ENCODE measurements at regions of chr4 and their contacts with region 1.

Region 1: GRCh38 chr4:69881173-69881773 is 21.3 kb upstream of the SULT1E1 start:
- DNase-seq: no peak
- H3K4me3 ChIP-seq: no peak overlapping the region
- H3K27ac ChIP-seq: no peak overlapping the region
- H3K4me1 ChIP-seq: no peaks in the 10 kb centered on the region
- H3K27me3 ChIP-seq: no peaks in the 10 kb centered on the region
- CTCF ChIP-seq: peak in 2 of 3 experiments; percentile 74 to 85; a peak in 3 of 4 replicates
- EP300 ChIP-seq: no peak
- POLR2A ChIP-seq: no peak
- RAD21 ChIP-seq: peak; percentile 97

Region 2: DNA sequence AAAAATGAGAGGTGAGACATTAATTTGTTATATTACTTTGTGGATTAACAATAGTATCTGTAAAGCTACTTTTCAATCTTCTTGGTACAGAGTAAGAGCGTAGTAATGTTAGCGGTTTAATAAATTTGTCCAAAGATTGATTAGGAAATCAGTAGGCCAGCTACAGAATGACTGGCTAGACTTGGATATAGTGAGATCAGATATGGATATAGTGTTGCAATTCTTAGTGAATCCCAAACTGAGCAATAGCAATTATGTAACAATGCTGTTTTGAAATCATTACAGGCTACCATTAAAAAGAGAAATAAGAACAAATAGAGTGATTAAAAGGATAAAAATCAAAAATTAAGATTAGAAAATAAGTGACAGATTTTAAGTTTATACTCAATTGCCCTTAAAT is 241.0 kb before region 1 on chr4:
- CTCF ChIA-PET with region 1: no interaction called
- POLR2A ChIA-PET with region 1: no interaction called
- DNase-seq: no peak
- H3K4me3 ChIP-seq: no peak overlapping the region
- H3K27ac ChIP-seq: no peak overlapping the region
- H3K4me1 ChIP-seq: no peaks in the 10 kb centered on the region
- H3K27me3 ChIP-seq: no peaks in the 10 kb centered on the region
- CTCF ChIP-seq: no peak
- EP300 ChIP-seq: no peak
- POLR2A ChIP-seq: no peak
- RAD21 ChIP-seq: no peak

Region 3: GRCh38 chr4:69838977-69839376 is 42.3 kb before region 1 on chr4:
- CTCF ChIA-PET with region 1: interaction called, 10 read pairs
- POLR2A ChIA-PET with region 1: no interaction called
- DNase-seq: no peak
- H3K4me3 ChIP-seq: no peak overlapping the region
- H3K27ac ChIP-seq: no peak overlapping the region
- H3K4me1 ChIP-seq: no peaks in the 10 kb centered on the region
- H3K27me3 ChIP-seq: no peaks in the 10 kb centered on the region
- CTCF ChIP-seq: no peak
- EP300 ChIP-seq: no peak
- POLR2A ChIP-seq: no peak
- RAD21 ChIP-seq: no peak

Region 4: GRCh38 chr4:69909195-69909594 is 27.9 kb after region 1 on chr4:
- CTCF ChIA-PET with region 1: no interaction called
- POLR2A ChIA-PET with region 1: no interaction called
- DNase-seq: no peak
- H3K4me3 ChIP-seq: no peak overlapping the region
- H3K27ac ChIP-seq: no peak overlapping the region
- H3K4me1 ChIP-seq: no peaks in the 10 kb centered on the region
- H3K27me3 ChIP-seq: no peaks in the 10 kb centered on the region
- CTCF ChIP-seq: no peak
- EP300 ChIP-seq: no peak
- POLR2A ChIP-seq: no peak
- RAD21 ChIP-seq: no peak

Region 5: DNA sequence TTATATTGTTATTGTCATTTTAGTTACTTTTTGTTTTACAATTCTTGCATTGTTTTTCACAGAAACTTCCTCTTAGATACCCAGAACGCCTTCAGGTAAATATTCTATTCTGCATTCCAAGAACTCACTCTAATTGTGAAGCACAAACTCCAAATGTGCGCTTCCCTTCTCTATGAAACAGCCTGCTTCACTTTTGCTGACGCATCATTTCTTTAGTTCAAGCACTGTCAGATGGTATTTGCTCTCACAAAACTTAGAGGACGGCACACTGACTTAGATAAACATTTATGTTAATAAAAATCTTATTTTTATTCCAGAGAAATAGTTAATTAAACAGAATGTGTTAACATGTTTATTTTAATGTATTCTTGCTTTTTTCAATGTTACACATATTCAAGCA is 52.9 kb after region 1 on chr4:
- CTCF ChIA-PET with region 1: no interaction called
- POLR2A ChIA-PET with region 1: no interaction called
- DNase-seq: no peak
- H3K4me3 ChIP-seq: no peak overlapping the region
- H3K27ac ChIP-seq: no peak overlapping the region
- H3K4me1 ChIP-seq: no peaks in the 10 kb centered on the region
- H3K27me3 ChIP-seq: peaks cover 0 to 1% (median 0%) of the 10 kb centered on the region in 4 experiments; a peak in 1 of 7 replicates
- CTCF ChIP-seq: no peak
- EP300 ChIP-seq: no peak
- POLR2A ChIP-seq: no peak
- RAD21 ChIP-seq: no peak